ENCODE measurements at regions of chr3 and their contacts with region 1.

Region 1: DNA sequence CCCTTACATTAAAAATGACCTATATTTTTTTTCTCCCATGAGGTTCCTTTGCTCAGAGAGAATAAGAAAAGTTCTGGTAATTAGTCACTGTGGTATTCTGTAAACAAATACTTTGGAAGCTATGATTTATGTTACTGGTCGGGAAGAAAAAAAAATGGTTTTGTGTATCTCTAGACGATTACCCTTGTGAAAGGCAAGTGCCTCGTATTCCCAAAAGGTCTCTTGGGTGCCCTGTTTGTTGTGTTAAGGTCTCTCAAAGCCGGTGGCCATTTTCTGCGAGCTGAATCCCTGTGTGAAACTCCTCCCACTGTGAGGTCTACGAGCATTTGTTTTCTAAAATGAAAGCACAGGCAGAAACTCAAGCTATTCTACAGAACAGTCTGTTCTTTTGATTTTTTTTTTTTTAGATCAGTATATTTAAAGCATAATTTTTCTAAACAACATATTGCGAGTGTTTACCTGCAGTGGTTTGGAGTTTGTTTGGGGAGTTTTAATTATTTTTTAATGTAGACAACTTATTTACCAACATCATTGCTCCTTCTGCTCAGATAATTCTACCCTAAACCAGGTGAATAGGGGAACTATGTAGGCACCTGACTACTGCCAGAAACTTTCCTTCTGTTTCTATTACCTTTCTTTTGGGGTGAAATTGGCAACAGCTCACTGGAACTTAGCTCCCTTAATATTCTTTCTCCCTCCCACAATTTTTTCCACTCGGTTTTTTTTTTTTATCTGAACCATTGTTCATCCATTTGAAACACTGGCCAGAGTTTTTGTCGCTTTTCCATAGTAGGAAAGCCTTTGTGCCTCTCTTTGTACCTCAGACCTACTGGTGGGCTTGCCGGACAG is 44.0 kb downstream of the ZBTB38 start:
- DNase-seq: peak in 4 of 10 donors; percentile 46 to 74 (median 64)
- H3K4me3 ChIP-seq: peak overlapping the region; percentile 11 to 70 (median 49)
- H3K27ac ChIP-seq: peak overlapping the region; percentile 82 to 99 (median 97)
- H3K27me3 ChIP-seq: no peaks in the 10 kb centered on the region
- CTCF ChIP-seq: no peak

Region 2: DNA sequence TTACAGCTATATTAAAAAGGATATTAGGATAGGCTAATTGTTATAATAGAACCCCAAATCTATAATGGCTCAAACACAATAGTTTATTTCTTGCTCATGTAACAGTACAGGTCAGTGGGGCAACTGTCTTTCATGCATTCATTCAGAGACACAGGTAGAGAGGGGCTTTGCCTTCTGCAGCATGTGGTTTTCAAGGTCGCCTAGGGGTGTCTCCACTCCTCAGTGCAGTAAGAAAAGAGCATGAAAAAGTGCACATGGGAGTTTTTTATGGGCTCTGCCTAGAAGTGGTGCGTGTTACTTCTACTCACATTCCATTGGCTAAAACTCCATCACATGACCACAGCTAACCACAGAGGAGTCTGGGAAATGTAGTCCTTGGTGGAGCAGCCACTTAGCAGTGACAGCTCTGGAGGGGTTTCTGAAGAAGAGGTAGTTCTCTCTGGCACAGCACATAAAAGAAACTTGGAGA is 42.2 kb before region 1 on chr3:
- intact Hi-C with region 1: loop called (anchors 2 to 5 kb)
- DNase-seq: peak in 3 of 10 donors; percentile 31 to 76 (median 53)
- H3K4me3 ChIP-seq: peak overlapping the region in 39 of 59 donors; percentile 5 to 68 (median 49)
- H3K27ac ChIP-seq: peak overlapping the region in 57 of 59 donors; percentile 38 to 99 (median 96)
- H3K27me3 ChIP-seq: no peaks in the 10 kb centered on the region
- CTCF ChIP-seq: peak in 51 of 56 donors; percentile 15 to 64 (median 45)

Region 3: DNA sequence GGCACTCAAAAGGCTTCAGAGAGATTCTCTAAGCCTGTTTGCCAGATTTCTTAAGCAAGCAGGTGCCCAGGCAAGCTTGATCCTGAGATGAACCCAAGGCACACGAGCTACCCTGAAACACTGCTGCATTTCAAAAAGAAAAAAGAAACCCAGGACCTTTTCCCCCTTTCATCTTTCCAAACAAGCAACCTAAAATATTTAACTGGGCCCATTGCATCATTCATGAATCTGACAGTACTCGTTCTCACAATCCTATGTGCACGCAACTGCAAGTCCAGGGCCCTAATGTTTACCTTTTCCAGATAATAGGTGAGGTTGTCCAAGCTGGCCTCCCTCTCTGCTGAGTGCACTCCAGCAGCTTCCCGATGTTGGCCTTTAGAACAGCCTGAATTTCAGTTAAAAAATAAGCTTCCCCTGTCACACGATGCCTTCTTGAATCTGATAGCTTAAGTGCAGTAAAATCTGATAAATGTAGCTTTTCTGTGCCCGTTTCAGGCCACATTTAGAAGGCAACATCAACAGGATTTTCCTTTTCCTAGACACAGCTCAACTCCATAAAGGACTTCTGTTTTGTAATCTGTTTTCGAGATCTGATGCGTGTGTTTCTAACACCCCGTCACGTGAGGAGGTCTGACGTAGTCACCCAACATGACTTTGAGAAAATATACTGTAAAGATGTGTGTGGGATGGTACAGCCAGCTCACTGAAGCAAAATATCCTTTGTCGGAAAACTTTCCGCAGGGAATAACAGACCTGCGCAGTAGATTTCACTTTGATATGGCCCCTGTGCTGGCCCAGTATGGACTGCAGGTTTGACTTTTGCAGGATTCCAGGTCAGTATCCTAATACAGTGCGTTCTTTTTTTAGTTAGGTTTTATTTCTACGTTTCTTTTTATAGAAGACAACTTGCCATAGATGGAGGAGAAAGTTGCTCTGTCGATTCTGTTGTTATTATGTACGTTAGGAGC is 19.4 kb after region 1 on chr3:
- intact Hi-C with region 1: loop called in 1 of 2 experiments (anchors 2 kb)
- DNase-seq: peak in 4 of 10 donors; percentile 63 to 87 (median 65)
- H3K4me3 ChIP-seq: peak overlapping the region in 57 of 59 donors; percentile 2 to 65 (median 34)
- H3K27ac ChIP-seq: peak overlapping the region; percentile 47 to 95 (median 88)
- H3K27me3 ChIP-seq: no peaks in the 10 kb centered on the region
- CTCF ChIP-seq: no peak

Region 4: GRCh38 chr3:141887051-141887450 is 474.7 kb after region 1 on chr3:
- intact Hi-C with region 1: no loop called
- DNase-seq: no peak
- H3K4me3 ChIP-seq: no peak overlapping the region
- H3K27ac ChIP-seq: no peak overlapping the region
- H3K27me3 ChIP-seq: no peaks in the 10 kb centered on the region
- CTCF ChIP-seq: no peak